ENCODE measurements at regions of chr3 and their contacts with region 1.

Region 1: DNA sequence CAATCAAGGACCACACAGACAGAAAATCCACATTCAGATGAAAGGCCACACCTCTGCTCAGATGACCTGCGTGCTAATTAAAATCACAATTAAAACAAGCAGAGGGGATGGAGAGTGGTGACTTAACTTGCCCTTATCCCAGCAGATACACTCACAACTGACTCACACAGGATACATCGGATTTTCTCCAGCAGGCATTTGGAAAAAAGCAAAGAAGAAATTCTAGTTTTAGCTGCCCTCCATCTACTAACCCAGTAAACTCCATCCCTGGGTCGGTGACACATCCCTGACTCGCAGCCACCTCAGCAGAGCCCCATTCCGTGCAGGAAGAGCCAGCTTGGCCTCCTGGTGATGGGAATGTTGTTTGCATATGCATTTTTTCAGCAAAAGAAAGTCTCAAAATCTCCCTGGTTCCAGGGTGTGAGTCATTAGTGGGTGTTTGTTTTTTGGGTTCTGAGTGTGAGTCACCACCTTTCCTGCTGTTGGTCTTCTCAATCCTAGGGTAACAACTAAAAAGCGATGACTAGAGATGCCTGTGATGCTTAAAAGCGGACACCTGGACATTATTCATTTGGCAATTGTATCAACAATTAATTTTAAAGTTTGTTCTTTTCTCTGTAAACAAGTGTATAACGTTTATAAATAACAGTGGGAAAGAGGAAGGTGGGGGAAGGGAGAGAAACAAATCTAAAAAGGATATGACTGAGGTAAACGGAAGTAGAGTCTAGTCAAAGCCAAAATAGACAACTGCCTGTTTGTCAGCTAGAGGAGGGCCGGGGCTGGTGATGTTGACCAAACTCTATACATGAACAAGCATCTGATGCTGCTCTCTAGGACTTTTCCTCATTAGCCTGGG is 49.8 kb upstream of the SLC4A7 start:
- DNase-seq: peak; percentile 20
- H3K4me3 Mint-ChIP-seq: peak overlapping the region; percentile 46
- H3K27ac Mint-ChIP-seq: peak overlapping the region; percentile 92
- H3K4me1 Mint-ChIP-seq: peaks cover 31% of the 10 kb centered on the region
- H3K27me3 Mint-ChIP-seq: no peaks in the 10 kb centered on the region

Region 2: GRCh38 chr3:27494784-27495183 is 39.2 kb before region 1 on chr3:
- intact Hi-C with region 1: no loop called
- DNase-seq: no peak
- H3K4me3 Mint-ChIP-seq: no peak overlapping the region
- H3K27ac Mint-ChIP-seq: no peak overlapping the region
- H3K4me1 Mint-ChIP-seq: peaks cover 6% of the 10 kb centered on the region
- H3K27me3 Mint-ChIP-seq: peaks cover 2% of the 10 kb centered on the region

Region 3: DNA sequence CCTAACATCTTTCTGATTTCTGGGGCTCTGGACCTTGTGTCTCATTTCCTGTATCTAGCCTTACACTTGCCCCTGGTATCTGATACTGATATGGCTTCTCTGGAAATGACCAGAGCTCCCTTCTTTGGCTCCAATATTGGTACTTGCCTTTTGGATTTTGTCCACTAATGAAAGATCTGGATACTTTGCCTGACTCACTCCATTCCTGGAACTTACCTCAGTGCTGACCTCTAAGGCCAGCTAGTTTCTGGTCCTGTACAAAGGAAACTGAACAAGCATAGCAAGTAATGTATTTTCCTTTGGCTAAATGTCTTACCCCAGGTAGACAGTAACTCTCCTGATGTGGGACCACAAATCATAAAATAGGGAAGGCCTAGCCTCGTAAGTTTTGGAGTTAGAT is 44.1 kb after region 1 on chr3:
- intact Hi-C with region 1: loop called (anchors 5 kb)
- DNase-seq: no peak
- H3K4me3 Mint-ChIP-seq: no peak overlapping the region
- H3K27ac Mint-ChIP-seq: no peak overlapping the region
- H3K4me1 Mint-ChIP-seq: peaks cover 21% of the 10 kb centered on the region
- H3K27me3 Mint-ChIP-seq: no peaks in the 10 kb centered on the region

Region 4: GRCh38 chr3:27590437-27591298 is 56.7 kb after region 1 on chr3:
- intact Hi-C with region 1: loop called (anchors 1 kb)
- DNase-seq: no peak
- H3K4me3 Mint-ChIP-seq: peak overlapping the region; percentile 31
- H3K27ac Mint-ChIP-seq: peak overlapping the region; percentile 76
- H3K4me1 Mint-ChIP-seq: peaks cover 28% of the 10 kb centered on the region
- H3K27me3 Mint-ChIP-seq: no peaks in the 10 kb centered on the region

Region 5: GRCh38 chr3:27632431-27633223 is 98.7 kb after region 1 on chr3:
- intact Hi-C with region 1: loop called (anchors 1 kb)
- DNase-seq: peak; percentile 25
- H3K4me3 Mint-ChIP-seq: peak overlapping the region; percentile 86
- H3K27ac Mint-ChIP-seq: peak overlapping the region; percentile 82
- H3K4me1 Mint-ChIP-seq: peaks cover 41% of the 10 kb centered on the region
- H3K27me3 Mint-ChIP-seq: no peaks in the 10 kb centered on the region